Activated naive CD4-positive, alpha-beta T cell treated with anti-CD3 and anti-CD28 coated beads, Interleukin-2, amount 10 ng/mL, durations not matched to agents 7 days and 5 days (primary cell): ENCODE measurements at regions of chr6 and their contacts with region 1.

Region 1: GRCh38 chr6:35419417-35419816 is 32.7 kb upstream of the FANCE start:
- DNase-seq: peak; percentile 64
- H3K4me3 Mint-ChIP-seq: peak overlapping the region; percentile 12
- H3K27ac Mint-ChIP-seq: peak overlapping the region; percentile 89
- H3K4me1 Mint-ChIP-seq: peaks cover 53% of the 10 kb centered on the region
- H3K27me3 Mint-ChIP-seq: no peaks in the 10 kb centered on the region

Region 2: GRCh38 chr6:34094474-34095135 is 1324.8 kb before region 1 on chr6:
- CTCF ChIA-PET with region 1: no interaction called
- DNase-seq: no peak
- H3K4me3 Mint-ChIP-seq: no peak overlapping the region
- H3K27ac Mint-ChIP-seq: no peak overlapping the region
- H3K4me1 Mint-ChIP-seq: no peaks in the 10 kb centered on the region
- H3K27me3 Mint-ChIP-seq: peaks cover 37% of the 10 kb centered on the region

Region 3: GRCh38 chr6:35342258-35343091 is 76.9 kb before region 1 on chr6 and contains the start of gene PPARD:
- CTCF ChIA-PET with region 1: interaction called, 25 read pairs
- DNase-seq: peak; percentile 98
- H3K4me3 Mint-ChIP-seq: peak within 1 kb of the TSS; percentile 95
- H3K27ac Mint-ChIP-seq: peak within 1 kb of the TSS; percentile 86
- H3K4me1 Mint-ChIP-seq: peaks cover 53% of the 10 kb centered on the region
- H3K27me3 Mint-ChIP-seq: peaks cover 7% of the 10 kb centered on the region

Region 4: DNA sequence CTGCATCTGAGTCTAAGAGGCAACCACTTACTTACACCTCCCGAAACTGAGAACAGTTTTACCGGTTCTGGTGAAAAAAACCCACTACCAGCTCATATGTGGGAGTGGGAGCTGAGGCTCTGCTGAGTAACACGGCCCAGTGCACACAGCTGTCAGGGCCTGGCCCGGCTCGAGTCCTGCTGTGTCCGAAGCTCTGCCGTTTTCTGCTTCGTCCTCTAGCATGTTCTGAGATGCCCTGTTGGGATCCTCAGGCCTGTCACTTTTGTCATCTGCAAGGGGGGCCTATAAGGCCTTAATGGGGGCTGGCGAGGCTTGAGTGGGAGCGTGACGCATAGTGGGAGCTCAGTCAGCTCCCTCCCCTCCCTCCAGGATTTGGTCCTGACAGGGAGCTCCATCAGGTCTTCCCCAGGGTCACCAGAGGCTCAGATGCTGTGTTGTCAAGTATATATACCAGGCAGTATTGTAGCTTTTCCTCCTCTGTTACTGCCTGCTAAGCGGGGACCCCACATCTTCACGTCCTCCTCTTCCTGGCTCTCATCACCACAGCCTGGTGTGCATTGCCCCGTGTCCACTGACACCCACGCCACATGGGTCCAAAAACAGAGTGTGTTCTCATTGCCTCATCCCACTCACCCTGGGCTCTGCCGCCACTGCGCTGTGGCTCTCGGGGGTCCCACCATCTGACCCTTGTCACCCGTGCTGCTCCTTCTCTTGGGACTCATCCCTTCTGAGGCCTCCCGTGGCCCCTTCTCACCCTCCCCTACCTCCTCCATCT is 12.5 kb before region 1 on chr6:
- CTCF ChIA-PET with region 1: interaction called, 10 read pairs
- DNase-seq: no peak
- H3K4me3 Mint-ChIP-seq: no peak overlapping the region
- H3K27ac Mint-ChIP-seq: no peak overlapping the region
- H3K4me1 Mint-ChIP-seq: peaks cover 31% of the 10 kb centered on the region
- H3K27me3 Mint-ChIP-seq: no peaks in the 10 kb centered on the region

Region 5: DNA sequence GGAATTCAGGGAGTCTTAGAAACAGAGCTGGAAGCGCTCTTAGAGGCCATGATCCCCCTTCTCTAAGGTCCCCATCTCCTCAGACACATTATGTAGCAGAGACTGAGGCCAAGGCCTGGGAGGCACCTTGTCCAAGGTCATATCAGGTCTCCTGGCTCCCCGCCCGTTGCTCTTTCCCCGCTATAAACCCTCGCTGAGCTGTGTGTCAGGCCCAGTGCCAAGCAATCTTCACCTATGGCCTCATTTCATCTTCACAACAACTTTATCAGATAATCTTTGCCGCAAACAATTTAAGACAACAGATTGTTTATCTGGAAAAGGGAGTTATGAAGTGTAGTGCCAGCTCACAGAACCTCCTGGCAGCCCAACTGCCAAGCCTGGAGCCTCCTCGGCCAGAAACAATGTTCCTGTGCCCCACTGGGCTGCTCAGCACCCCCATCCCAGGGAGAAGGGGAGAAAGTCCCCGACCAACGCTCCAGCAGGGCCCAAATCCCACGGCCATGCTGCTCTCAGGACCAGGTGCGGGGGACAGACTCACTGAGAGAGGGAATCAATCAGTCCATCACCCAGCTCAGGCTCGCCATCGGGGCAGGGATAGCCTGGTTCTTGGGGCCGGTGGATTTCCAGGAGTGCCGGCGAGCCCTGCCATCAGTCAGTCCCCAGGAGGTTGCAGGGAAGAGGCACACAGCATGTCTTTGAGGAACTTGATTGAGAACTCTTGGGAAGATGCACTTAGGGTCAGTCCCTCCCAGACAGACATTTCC is 15.8 kb after region 1 on chr6:
- CTCF ChIA-PET with region 1: interaction called, 14 read pairs
- DNase-seq: no peak
- H3K4me3 Mint-ChIP-seq: no peak overlapping the region
- H3K27ac Mint-ChIP-seq: no peak overlapping the region
- H3K4me1 Mint-ChIP-seq: no peaks in the 10 kb centered on the region
- H3K27me3 Mint-ChIP-seq: peaks cover 17% of the 10 kb centered on the region

Region 6: GRCh38 chr6:35445696-35446095 is 26.3 kb after region 1 on chr6:
- CTCF ChIA-PET with region 1: interaction called, 66 read pairs
- DNase-seq: peak; percentile 67
- H3K4me3 Mint-ChIP-seq: no peak overlapping the region
- H3K27ac Mint-ChIP-seq: no peak overlapping the region
- H3K4me1 Mint-ChIP-seq: peaks cover 29% of the 10 kb centered on the region
- H3K27me3 Mint-ChIP-seq: peaks cover 42% of the 10 kb centered on the region

Region 7: GRCh38 chr6:35452186-35453090 is 33.0 kb after region 1 on chr6 and contains the start of gene FANCE:
- CTCF ChIA-PET with region 1: interaction called, 66 read pairs
- DNase-seq: peak; percentile 95
- H3K4me3 Mint-ChIP-seq: peak within 1 kb of the TSS; percentile 80
- H3K27ac Mint-ChIP-seq: peak within 1 kb of the TSS; percentile 80
- H3K4me1 Mint-ChIP-seq: peaks cover 57% of the 10 kb centered on the region
- H3K27me3 Mint-ChIP-seq: peaks cover 30% of the 10 kb centered on the region

Region 8: DNA sequence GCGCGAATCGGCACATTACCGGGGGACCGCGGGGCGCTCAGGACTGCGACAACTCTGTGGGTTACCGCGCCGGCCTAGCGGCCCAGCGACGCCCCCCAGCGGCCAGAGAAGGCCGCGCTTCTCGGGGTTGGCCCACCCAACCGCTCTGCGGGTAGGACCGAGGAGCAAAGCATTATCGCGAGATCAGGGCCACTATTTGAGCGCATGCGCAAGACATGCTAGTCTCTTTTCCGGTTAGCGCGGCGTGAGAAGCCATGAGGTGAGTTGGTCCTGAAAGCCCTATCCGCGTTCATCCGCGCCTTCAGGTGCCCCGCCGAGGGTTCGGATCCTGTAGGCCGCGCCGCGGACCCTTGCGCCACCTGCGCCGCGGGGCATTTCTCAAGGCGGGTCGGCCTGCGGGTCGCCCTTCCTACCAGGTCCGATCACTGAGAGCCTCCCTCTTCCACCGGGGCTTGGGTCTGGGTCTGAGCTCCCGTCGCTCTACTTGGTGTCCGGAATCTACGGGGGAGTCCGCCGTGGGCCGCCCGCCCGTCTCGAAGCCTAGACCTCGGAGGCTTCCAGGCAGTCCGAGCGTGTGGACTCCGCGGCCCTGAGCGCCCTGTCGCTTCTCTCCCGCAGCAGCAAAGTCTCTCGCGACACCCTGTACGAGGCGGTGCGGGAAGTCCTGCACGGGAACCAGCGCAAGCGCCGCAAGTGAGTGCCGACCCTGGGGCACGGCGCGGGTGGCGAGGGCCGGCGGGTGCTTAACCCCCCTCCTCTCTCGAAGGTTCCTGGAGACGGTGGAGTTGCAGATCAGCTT is 49.0 kb after region 1 on chr6 and contains the start of gene RPL10A:
- CTCF ChIA-PET with region 1: interaction called, 22 read pairs
- DNase-seq: peak; percentile 97
- H3K4me3 Mint-ChIP-seq: peak within 1 kb of the TSS; percentile 99
- H3K27ac Mint-ChIP-seq: peak within 1 kb of the TSS; percentile 99
- H3K4me1 Mint-ChIP-seq: peaks cover 41% of the 10 kb centered on the region
- H3K27me3 Mint-ChIP-seq: no peaks in the 10 kb centered on the region

Region 9: GRCh38 chr6:35691027-35691824 is 271.8 kb after region 1 on chr6:
- CTCF ChIA-PET with region 1: no interaction called
- DNase-seq: no peak
- H3K4me3 Mint-ChIP-seq: no peak overlapping the region
- H3K27ac Mint-ChIP-seq: no peak overlapping the region
- H3K4me1 Mint-ChIP-seq: peaks cover 10% of the 10 kb centered on the region
- H3K27me3 Mint-ChIP-seq: no peaks in the 10 kb centered on the region